Activated CD4-positive, alpha-beta T cell treated with anti-CD3 and anti-CD28 coated beads, Interleukin-2, amount 10 ng/mL, durations not matched to agents 24 days and 14 days (primary cell): ENCODE measurements at regions of chr16 and their contacts with region 1.

Region 1: GRCh38 chr16:4402439-4403132 is 13.8 kb downstream of the CORO7 start:
- DNase-seq: peak; percentile 91
- H3K4me3 Mint-ChIP-seq: no peak overlapping the region
- H3K27ac Mint-ChIP-seq: no peak overlapping the region
- H3K4me1 Mint-ChIP-seq: peaks cover 2% of the 10 kb centered on the region
- H3K27me3 Mint-ChIP-seq: no peaks in the 10 kb centered on the region

Region 2: GRCh38 chr16:4350787-4351659 is 51.6 kb before region 1 on chr16 and contains the start of gene PAM16:
- intact Hi-C with region 1: loop called (anchors 5 kb)
- DNase-seq: peak; percentile 100
- H3K4me3 Mint-ChIP-seq: peak within 1 kb of the TSS; percentile 96
- H3K27ac Mint-ChIP-seq: peak within 1 kb of the TSS; percentile 94
- H3K4me1 Mint-ChIP-seq: peaks cover 12% of the 10 kb centered on the region
- H3K27me3 Mint-ChIP-seq: no peaks in the 10 kb centered on the region
- total RNA-seq, gene PAM16: 93.5 and 104 TPM in 2 replicates

Region 3: GRCh38 chr16:4360538-4361021 is 42.0 kb before region 1 on chr16:
- intact Hi-C with region 1: loop called (anchors 2 kb)
- DNase-seq: peak; percentile 72
- H3K4me3 Mint-ChIP-seq: no peak overlapping the region
- H3K27ac Mint-ChIP-seq: no peak overlapping the region
- H3K4me1 Mint-ChIP-seq: no peaks in the 10 kb centered on the region
- H3K27me3 Mint-ChIP-seq: no peaks in the 10 kb centered on the region

Region 4: DNA sequence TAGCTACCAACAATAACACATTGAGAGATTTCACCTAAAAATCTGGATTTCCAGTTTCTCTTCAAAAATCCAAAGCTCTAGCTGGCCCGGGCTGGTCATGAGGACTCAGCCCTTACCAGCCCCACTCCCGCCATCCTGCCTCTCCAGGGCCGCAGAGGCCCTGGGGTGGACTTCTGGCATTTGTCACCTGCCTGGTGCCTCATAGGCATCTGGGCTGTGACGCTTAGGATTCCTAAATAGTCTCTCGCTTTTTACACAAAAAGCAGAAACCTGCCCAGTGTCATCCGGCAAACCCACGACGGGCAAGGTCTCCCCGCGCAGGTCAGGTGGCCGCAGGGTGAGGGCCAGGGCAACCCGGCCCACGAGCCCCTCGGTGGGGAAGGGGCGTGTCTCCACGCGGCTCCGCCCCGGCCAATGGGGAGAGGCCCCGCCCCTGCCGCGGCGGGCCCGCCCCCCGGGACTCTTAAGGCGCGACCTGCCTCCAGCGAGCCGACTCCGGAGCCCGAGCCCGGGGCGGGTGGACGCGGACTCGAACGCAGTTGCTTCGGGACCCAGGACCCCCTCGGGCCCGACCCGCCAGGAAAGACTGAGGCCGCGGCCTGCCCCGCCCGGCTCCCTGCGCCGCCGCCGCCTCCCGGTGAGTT is 31.1 kb before region 1 on chr16 and contains the start of gene VASN:
- intact Hi-C with region 1: no loop called
- DNase-seq: peak; percentile 92
- H3K4me3 Mint-ChIP-seq: peak within 1 kb of the TSS; percentile 68
- H3K27ac Mint-ChIP-seq: no peak within 1 kb of the TSS
- H3K4me1 Mint-ChIP-seq: no peaks in the 10 kb centered on the region
- H3K27me3 Mint-ChIP-seq: no peaks in the 10 kb centered on the region
- total RNA-seq, gene VASN: 0.16 TPM in 1 of 2 replicates, not detected in the other